ENCODE measurements at regions of chr3 and their contacts with region 1.

Region 1: GRCh38 chr3:61561374-61562041 is at the start of gene PTPRG:
- DNase-seq: peak; percentile 67
- ATAC-seq: peak; percentile 62
- H3K4me3 Mint-ChIP-seq: peak within 1 kb of the TSS; percentile 76
- H3K27ac Mint-ChIP-seq: no peak within 1 kb of the TSS
- H3K4me1 Mint-ChIP-seq: peaks cover 13% of the 10 kb centered on the region
- H3K27me3 Mint-ChIP-seq: peaks cover 60% of the 10 kb centered on the region
- total RNA-seq, gene PTPRG: 0.32 to 0.33 TPM

Region 2: GRCh38 chr3:61251174-61251972 is 310.1 kb before region 1 on chr3 and contains the start of gene FHIT:
- CTCF ChIA-PET with region 1: no interaction called
- POLR2A ChIA-PET with region 1: no interaction called
- intact Hi-C with region 1: loop called in 1 of 2 experiments (anchors 2 kb)
- DNase-seq: peak; percentile 96
- ATAC-seq: peak; percentile 95
- H3K4me3 Mint-ChIP-seq: peak within 1 kb of the TSS; percentile 84
- H3K27ac Mint-ChIP-seq: peak within 1 kb of the TSS; percentile 92
- H3K4me1 Mint-ChIP-seq: peaks cover 15% of the 10 kb centered on the region
- H3K27me3 Mint-ChIP-seq: peaks cover 2% of the 10 kb centered on the region
- total RNA-seq, gene FHIT: 10.2 to 13.1 TPM

Region 3: GRCh38 chr3:61520966-61521628 is 40.4 kb before region 1 on chr3:
- CTCF ChIA-PET with region 1: interaction called, 3 read pairs
- POLR2A ChIA-PET with region 1: no interaction called
- intact Hi-C with region 1: loop called in 1 of 2 experiments (anchors 2 kb)
- DNase-seq: peak; percentile 80
- ATAC-seq: peak; percentile 99
- H3K4me3 Mint-ChIP-seq: no peak overlapping the region
- H3K27ac Mint-ChIP-seq: peak overlapping the region; percentile 83
- H3K4me1 Mint-ChIP-seq: peaks cover 36% of the 10 kb centered on the region
- H3K27me3 Mint-ChIP-seq: no peaks in the 10 kb centered on the region

Region 4: GRCh38 chr3:61936344-61936937 is 374.9 kb after region 1 on chr3:
- CTCF ChIA-PET with region 1: no interaction called
- POLR2A ChIA-PET with region 1: no interaction called
- intact Hi-C with region 1: loop called in 1 of 2 experiments (anchors 10 kb)
- DNase-seq: peak; percentile 49
- ATAC-seq: no peak
- H3K4me3 Mint-ChIP-seq: no peak overlapping the region
- H3K27ac Mint-ChIP-seq: no peak overlapping the region
- H3K4me1 Mint-ChIP-seq: no peaks in the 10 kb centered on the region
- H3K27me3 Mint-ChIP-seq: peaks cover 6% of the 10 kb centered on the region

Region 5: GRCh38 chr3:62188681-62189383 is 627.3 kb after region 1 on chr3:
- CTCF ChIA-PET with region 1: interaction called, 3 read pairs
- POLR2A ChIA-PET with region 1: no interaction called
- intact Hi-C with region 1: loop called in 1 of 2 experiments (anchors 10 kb)
- DNase-seq: peak; percentile 82
- ATAC-seq: peak; percentile 73
- H3K4me3 Mint-ChIP-seq: no peak overlapping the region
- H3K27ac Mint-ChIP-seq: no peak overlapping the region
- H3K4me1 Mint-ChIP-seq: peaks cover 4% of the 10 kb centered on the region
- H3K27me3 Mint-ChIP-seq: no peaks in the 10 kb centered on the region

Region 6: DNA sequence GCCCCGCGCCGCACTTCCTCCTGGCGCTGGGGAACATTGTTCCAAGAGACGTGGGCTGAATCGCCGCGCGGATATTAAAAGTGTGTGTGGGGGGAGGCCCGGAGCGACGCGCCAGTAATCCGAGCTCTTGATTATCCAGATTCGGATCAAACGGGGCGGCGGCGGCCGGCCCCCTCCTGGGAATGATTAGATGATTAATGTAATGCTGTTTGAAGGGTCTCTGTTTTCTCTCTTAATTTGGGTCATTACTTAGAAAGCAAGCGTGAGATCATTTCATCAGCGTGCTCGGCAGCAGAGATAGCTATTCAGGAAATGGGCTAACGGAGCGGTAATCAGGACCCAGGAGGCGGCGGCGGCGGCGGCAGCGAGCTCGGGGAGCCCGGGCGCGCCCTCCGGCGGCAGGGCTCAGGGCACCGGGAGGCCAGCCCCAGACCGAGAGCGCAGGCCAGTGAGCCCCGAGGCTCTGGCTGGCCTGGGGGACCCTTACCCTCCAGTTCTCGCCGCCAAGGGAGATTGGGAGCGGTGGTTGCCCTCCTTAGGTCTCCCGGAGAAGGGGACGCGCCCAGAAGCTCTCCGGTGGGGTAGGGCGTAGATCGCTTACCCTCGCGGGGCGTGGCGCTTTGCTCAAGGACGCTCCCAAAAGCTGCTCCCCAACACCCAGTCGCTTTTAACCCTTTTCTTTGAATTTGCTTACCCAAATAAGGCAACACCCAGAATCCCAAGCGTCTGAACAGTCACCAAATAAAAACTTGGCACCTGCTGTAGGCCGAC is 807.4 kb after region 1 on chr3:
- CTCF ChIA-PET with region 1: no interaction called
- POLR2A ChIA-PET with region 1: no interaction called
- intact Hi-C with region 1: loop called (anchors 5 to 10 kb)
- DNase-seq: peak; percentile 21
- ATAC-seq: no peak
- H3K4me3 Mint-ChIP-seq: no peak overlapping the region
- H3K27ac Mint-ChIP-seq: no peak overlapping the region
- H3K4me1 Mint-ChIP-seq: peaks cover 3% of the 10 kb centered on the region
- H3K27me3 Mint-ChIP-seq: peaks cover 70% of the 10 kb centered on the region

Region 7: GRCh38 chr3:62374341-62375218 is 813.1 kb after region 1 on chr3:
- CTCF ChIA-PET with region 1: no interaction called
- POLR2A ChIA-PET with region 1: no interaction called
- intact Hi-C with region 1: loop called (anchors 5 to 10 kb)
- DNase-seq: no peak
- ATAC-seq: no peak
- H3K4me3 Mint-ChIP-seq: no peak overlapping the region
- H3K27ac Mint-ChIP-seq: no peak overlapping the region
- H3K4me1 Mint-ChIP-seq: peaks cover 7% of the 10 kb centered on the region
- H3K27me3 Mint-ChIP-seq: peaks cover 68% of the 10 kb centered on the region

Measured in activated CD4-positive, alpha-beta T cell treated with anti-CD3 and anti-CD28 coated beads for 36 hours (primary cell).